Activated B cell treated with CpG ODN at 0.5 μM for 24 hours (primary cell): ENCODE measurements at regions of chr13 and their contacts with region 1.

Region 1: GRCh38 chr13:79775830-79776229 is 294.9 kb downstream of the NDFIP2 start:
- DNase-seq: no peak
- ATAC-seq: no peak
- H3K4me3 Mint-ChIP-seq: no peak overlapping the region
- H3K27ac Mint-ChIP-seq: no peak overlapping the region
- H3K4me1 Mint-ChIP-seq: no peaks in the 10 kb centered on the region
- H3K27me3 Mint-ChIP-seq: peaks cover 2% of the 10 kb centered on the region
- CTCF ChIP-seq: no peak

Region 2: GRCh38 chr13:79703772-79704171 is 72.1 kb before region 1 on chr13:
- CTCF ChIA-PET with region 1: no interaction called
- POLR2A ChIA-PET with region 1: no interaction called
- intact Hi-C with region 1: no loop called
- DNase-seq: no peak
- ATAC-seq: no peak
- H3K4me3 Mint-ChIP-seq: no peak overlapping the region
- H3K27ac Mint-ChIP-seq: no peak overlapping the region
- H3K4me1 Mint-ChIP-seq: no peaks in the 10 kb centered on the region
- H3K27me3 Mint-ChIP-seq: no peaks in the 10 kb centered on the region
- CTCF ChIP-seq: no peak

Region 3: DNA sequence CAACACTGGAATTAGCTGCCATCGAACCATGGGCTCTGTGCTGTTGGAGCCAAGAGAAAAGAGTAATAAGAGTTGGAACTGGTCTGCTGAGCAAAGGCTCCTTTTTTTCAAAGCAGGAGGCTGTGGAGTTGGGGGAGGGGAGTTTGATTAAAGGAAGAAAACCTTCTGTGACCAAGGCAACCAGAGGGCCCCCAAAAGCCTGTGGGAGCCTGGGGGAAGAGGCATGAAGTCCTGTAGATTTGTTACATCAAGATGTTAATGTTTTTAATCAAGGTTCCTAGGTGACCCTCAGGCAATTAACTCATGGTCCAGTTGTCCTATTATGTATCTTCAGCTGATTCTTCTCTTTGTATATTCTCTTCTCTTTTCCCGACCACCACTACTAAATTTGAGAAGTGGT is 109.1 kb after region 1 on chr13:
- CTCF ChIA-PET with region 1: no interaction called
- POLR2A ChIA-PET with region 1: no interaction called
- intact Hi-C with region 1: no loop called
- DNase-seq: no peak
- ATAC-seq: no peak
- H3K4me3 Mint-ChIP-seq: no peak overlapping the region
- H3K27ac Mint-ChIP-seq: no peak overlapping the region
- H3K4me1 Mint-ChIP-seq: no peaks in the 10 kb centered on the region
- H3K27me3 Mint-ChIP-seq: no peaks in the 10 kb centered on the region
- CTCF ChIP-seq: no peak

Region 4: DNA sequence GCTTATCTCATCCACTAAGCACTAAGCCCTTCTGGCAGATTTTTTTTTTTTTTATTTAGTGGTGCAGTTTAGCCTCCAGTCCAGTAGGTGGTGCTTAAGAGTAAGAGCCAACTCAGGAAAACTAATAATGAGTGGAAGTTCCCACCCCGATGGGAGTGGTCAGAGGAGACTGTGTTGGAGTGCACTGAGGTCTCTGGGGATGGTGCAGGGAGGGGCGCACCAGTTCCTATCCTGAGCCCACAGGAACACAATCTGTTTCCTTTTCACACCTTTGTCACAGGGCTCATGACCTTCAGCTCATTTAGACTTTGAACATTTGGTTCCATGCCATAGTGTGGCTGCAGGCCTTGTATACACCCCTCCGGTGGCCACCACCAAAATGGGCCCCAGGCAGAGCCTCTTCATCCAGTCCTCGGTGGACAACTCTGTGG is 197.7 kb after region 1 on chr13:
- CTCF ChIA-PET with region 1: no interaction called
- POLR2A ChIA-PET with region 1: no interaction called
- intact Hi-C with region 1: loop called (anchors 1 kb)
- DNase-seq: no peak
- ATAC-seq: peak; percentile 66
- H3K4me3 Mint-ChIP-seq: no peak overlapping the region
- H3K27ac Mint-ChIP-seq: no peak overlapping the region
- H3K4me1 Mint-ChIP-seq: no peaks in the 10 kb centered on the region
- H3K27me3 Mint-ChIP-seq: no peaks in the 10 kb centered on the region
- CTCF ChIP-seq: no peak